ENCODE measurements at regions of chr2 and their contacts with region 1.

Region 1: DNA sequence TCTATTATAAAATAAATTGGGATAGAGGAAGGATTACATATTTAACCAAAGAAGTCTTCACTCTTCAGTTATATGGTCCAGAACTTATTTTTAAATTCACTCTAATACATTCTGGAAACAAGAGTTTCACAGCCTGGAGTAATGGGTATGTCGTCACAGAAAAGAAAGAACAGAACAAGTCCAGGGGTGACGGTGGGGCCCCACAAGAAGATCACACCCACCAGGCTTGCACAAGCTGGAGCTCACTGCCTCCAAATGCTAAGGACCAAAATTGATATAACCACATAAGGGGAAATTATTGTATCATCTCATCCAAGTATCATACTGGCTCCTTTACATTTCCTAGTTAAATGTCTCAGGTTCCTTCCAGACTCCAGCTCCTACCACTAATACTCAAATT is 11.3 kb downstream of the LRPPRC start:
- DNase-seq: no peak
- ATAC-seq: no peak
- H3K4me3 Mint-ChIP-seq: no peak overlapping the region
- H3K27ac Mint-ChIP-seq: no peak overlapping the region
- H3K4me1 Mint-ChIP-seq: peaks cover 26% of the 10 kb centered on the region
- H3K27me3 Mint-ChIP-seq: no peaks in the 10 kb centered on the region

Region 2: DNA sequence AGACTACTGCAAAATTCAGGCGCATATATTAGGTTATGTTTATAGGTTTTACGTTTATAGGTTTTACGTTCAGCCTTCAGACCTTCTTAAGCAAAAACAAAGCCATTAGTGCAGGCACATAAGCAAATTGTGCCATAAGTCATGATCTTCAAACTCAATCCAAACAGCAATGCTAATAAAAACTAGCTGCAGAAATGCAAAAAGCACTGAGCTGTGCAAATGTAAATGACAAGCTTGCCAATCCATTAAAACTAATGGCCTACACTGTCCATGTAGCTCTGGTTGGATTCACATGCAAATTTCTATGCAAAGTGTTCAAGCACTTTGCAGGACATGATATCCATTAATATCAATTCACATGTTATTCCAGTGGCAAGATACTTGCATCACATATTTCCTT is 39.6 kb before region 1 on chr2:
- CTCF ChIA-PET with region 1: no interaction called
- POLR2A ChIA-PET with region 1: no interaction called
- intact Hi-C with region 1: loop called in 1 of 2 experiments (anchors 5 kb)
- DNase-seq: no peak
- ATAC-seq: no peak
- H3K4me3 Mint-ChIP-seq: no peak overlapping the region
- H3K27ac Mint-ChIP-seq: no peak overlapping the region
- H3K4me1 Mint-ChIP-seq: no peaks in the 10 kb centered on the region
- H3K27me3 Mint-ChIP-seq: no peaks in the 10 kb centered on the region

Measured in activated CD4-positive, alpha-beta T cell treated with anti-CD3 and anti-CD28 coated beads for 36 hours (primary cell).